Esophagus muscularis mucosa (tissue), 4 donors: ENCODE measurements at regions of chr22 and their contacts with region 1.

Region 1: DNA sequence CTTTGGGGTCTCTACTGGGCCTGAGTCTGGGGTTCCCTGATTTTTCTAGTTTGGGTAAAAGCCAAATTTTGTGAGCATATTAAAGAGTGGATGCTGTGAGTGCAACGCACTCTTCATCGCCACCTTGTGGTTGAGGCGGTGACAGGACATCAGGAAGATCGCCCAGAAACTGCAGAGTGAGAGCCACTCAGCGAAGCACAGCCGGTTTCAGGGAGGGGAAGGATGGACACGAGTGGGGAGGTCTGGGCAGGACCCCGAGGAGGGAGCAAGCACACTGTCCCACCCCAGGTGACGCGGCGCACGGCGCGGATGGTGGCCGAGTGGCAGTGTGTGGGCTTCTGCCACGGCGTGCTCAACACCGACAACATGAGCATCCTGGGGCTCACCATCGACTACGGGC is 9.1 kb downstream of the SELENOO start:
- DNase-seq: no peak
- H3K4me3 ChIP-seq: no peak overlapping the region
- H3K27ac ChIP-seq: no peak overlapping the region
- H3K4me1 ChIP-seq: peaks cover 17 to 53% (median 37%) of the 10 kb centered on the region in 4 donors
- H3K27me3 ChIP-seq: no peaks in the 10 kb centered on the region
- CTCF ChIP-seq: peak; percentile 77 to 89 (median 77)
- EP300 ChIP-seq: no peak
- POLR2A ChIP-seq: no peak

Region 2: GRCh38 chr22:49815641-49816071 is 394.2 kb before region 1 on chr22:
- intact Hi-C with region 1: no loop called
- DNase-seq: no peak
- H3K4me3 ChIP-seq: no peak overlapping the region
- H3K27ac ChIP-seq: no peak overlapping the region
- H3K4me1 ChIP-seq: peaks cover 49 to 85% (median 76%) of the 10 kb centered on the region in 4 donors
- H3K27me3 ChIP-seq: no peaks in the 10 kb centered on the region
- CTCF ChIP-seq: no peak
- EP300 ChIP-seq: no peak
- POLR2A ChIP-seq: no peak

Region 3: DNA sequence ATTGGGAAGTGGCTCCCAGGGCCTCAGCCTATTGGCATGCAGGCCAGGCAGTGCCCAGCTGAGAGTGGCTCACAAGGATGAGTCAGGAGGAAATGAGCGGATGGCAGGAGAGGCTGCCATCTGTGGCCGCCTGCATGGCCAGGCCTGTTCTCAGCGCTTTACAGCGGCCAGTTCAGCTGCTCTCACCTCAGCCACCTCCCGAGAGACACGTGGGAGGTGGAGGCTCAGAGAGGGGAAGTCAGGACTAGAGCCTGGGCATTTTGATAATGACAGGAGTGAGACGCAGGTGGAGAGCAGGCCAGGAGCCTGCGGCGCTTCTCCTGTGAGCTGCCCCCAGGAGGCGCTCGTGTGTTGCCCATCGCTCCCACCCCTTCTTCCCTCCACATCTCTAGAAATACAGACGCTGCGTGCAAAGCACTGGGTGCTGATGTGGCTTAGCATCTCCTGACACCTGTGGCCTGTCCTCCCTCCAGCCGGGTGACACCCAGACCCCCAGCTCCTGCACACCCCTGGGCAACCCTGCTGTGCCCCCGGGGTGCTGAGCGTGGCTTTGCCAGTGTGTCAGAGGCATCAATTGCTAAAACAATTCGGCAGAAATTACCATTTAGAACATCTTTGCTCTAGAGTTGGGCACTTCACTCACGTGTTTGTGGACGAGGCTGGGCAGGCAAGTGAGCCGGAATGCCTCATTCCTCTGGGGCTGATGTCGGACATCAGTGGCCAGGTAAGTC is 60.7 kb before region 1 on chr22:
- intact Hi-C with region 1: loop called (anchors 2 kb)
- DNase-seq: no peak
- H3K4me3 ChIP-seq: no peak overlapping the region
- H3K27ac ChIP-seq: no peak overlapping the region
- H3K4me1 ChIP-seq: peaks cover 2 to 16% (median 9%) of the 10 kb centered on the region in 4 donors
- H3K27me3 ChIP-seq: peaks cover 0 to 7% (median 0%) of the 10 kb centered on the region in 4 donors
- CTCF ChIP-seq: peak; percentile 49 to 61 (median 50)
- EP300 ChIP-seq: no peak
- POLR2A ChIP-seq: no peak